ENCODE measurements at regions of chr6 and their contacts with region 1.

Region 1: DNA sequence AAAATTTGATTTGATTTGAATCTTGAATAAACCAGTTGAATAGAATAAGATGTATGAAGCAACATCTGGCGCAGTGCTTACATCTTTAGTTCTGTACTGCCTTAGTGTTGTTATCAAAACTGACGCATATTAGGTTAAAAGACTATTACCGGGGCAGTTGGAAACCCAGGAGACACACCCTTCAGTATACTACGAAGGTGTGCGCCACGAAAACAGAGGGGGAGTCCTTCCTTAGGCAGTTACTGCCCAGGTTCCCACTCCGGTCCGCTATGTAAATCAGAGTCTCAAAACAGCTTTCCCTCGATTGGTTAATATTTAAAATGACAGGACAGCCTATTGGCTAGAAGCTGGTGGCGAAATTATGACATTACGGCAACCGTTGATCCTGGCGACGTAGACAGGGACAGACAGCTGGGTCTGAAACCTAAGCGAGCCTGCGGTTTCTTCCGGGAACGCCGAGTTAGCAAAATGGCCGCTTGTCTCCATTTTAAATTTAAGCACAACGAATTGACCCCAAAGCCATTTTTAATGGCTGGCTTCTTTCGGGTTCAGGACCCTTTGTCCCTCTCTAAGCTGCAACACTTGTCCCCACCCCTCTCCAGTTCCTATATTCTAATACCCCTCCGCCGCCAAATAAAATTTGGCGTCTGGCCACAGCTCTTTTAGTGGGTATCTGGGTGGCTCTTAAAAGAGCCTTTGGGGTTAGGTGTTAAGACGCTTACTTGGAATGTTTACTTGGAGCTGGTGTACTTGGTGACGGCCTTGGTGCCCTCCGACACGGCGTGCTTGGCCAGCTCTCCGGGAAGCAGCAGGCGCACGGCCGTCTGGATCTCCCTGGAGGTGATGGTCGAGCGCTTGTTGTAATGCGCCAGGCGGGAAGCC is 35.8 kb downstream of the HFE start:
- DNase-seq: peak; percentile 95
- H3K4me3 Mint-ChIP-seq: peak overlapping the region; percentile 97
- H3K27ac Mint-ChIP-seq: peak overlapping the region; percentile 100
- H3K4me1 Mint-ChIP-seq: peaks cover 40% of the 10 kb centered on the region
- H3K27me3 Mint-ChIP-seq: no peaks in the 10 kb centered on the region

Region 2: GRCh38 chr6:25397406-25397805 is 725.6 kb before region 1 on chr6:
- CTCF ChIA-PET with region 1: no interaction called
- POLR2A ChIA-PET with region 1: no interaction called
- DNase-seq: no peak
- H3K4me3 Mint-ChIP-seq: no peak overlapping the region
- H3K27ac Mint-ChIP-seq: no peak overlapping the region
- H3K4me1 Mint-ChIP-seq: no peaks in the 10 kb centered on the region
- H3K27me3 Mint-ChIP-seq: no peaks in the 10 kb centered on the region

Region 3: DNA sequence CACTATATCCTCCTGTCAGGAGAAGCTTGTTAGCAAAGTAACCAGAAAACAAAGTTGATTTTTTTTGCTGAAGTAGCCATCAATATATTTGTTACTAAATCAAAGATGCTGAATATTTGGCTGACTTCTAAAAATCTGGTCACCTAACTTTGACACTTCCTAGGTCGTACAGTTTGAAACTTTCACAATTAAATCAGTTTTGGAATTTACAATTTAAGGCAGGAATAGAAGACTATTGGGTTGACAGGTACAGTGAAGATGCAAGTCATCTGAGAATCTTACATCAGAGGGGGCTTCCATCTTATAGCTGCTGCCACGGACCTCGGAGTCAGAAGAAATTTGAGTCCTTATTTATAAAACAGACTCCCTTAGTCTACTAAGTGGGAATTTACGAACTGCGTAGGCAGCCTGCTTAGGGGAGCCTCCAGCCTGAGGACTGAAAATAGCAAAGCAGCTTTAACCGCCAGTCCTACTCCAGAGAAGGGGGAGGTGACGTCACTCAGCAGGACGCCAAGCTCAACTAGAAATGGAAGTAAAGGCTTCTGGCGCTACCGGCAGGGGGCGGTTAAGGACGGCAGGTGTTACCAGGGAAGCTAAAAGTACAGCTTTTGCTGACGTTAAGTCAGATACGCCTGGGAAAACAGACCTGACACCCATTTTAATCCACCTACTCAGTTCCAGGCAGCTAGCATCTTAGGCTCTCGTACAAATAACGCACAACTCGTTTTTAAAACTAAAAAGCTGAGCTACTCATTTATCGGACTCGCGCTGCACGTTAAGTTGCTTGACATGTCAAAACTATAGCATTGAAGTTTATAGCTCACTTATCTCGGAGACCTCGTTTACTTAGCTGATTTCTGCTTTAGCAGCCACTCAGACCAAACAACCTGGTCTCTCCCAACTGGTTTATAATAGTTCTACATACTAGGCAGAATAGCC is 96.9 kb before region 1 on chr6:
- CTCF ChIA-PET with region 1: interaction called, 7 read pairs
- POLR2A ChIA-PET with region 1: interaction called, 289 read pairs
- DNase-seq: peak; percentile 94
- H3K4me3 Mint-ChIP-seq: peak overlapping the region; percentile 75
- H3K27ac Mint-ChIP-seq: peak overlapping the region; percentile 100
- H3K4me1 Mint-ChIP-seq: peaks cover 84% of the 10 kb centered on the region
- H3K27me3 Mint-ChIP-seq: peaks cover 2% of the 10 kb centered on the region

Region 4: DNA sequence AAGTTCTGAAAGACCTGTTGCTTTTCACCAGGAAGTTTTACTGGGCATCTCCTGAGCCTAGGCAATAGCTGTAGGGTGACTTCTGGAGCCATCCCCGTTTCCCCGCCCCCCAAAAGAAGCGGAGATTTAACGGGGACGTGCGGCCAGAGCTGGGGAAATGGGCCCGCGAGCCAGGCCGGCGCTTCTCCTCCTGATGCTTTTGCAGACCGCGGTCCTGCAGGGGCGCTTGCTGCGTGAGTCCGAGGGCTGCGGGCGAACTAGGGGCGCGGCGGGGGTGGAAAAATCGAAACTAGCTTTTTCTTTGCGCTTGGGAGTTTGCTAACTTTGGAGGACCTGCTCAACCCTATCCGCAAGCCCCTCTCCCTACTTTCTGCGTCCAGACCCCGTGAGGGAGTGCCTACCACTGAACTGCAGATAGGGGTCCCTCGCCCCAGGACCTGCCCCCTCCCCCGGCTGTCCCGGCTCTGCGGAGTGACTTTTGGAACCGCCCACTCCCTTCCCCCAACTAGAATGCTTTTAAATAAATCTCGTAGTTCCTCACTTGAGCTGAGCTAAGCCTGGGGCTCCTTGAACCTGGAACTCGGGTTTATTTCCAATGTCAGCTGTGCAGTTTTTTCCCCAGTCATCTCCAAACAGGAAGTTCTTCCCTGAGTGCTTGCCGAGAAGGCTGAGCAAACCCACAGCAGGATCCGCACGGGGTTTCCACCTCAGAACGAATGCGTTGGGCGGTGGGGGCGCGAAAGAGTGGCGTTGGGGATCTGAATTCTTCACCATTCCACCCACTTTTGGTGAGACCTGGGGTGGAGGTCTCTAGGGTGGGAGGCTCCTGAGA is 35.5 kb before region 1 on chr6 and contains the start of gene HFE:
- CTCF ChIA-PET with region 1: interaction called, 5 read pairs
- POLR2A ChIA-PET with region 1: interaction called, 50 read pairs
- DNase-seq: peak; percentile 37
- H3K4me3 Mint-ChIP-seq: peak within 1 kb of the TSS; percentile 77
- H3K27ac Mint-ChIP-seq: peak within 1 kb of the TSS; percentile 47
- H3K4me1 Mint-ChIP-seq: peaks cover 37% of the 10 kb centered on the region
- H3K27me3 Mint-ChIP-seq: peaks cover 8% of the 10 kb centered on the region
- total RNA-seq, gene HFE: 3.1 to 3.4 TPM

Region 5: DNA sequence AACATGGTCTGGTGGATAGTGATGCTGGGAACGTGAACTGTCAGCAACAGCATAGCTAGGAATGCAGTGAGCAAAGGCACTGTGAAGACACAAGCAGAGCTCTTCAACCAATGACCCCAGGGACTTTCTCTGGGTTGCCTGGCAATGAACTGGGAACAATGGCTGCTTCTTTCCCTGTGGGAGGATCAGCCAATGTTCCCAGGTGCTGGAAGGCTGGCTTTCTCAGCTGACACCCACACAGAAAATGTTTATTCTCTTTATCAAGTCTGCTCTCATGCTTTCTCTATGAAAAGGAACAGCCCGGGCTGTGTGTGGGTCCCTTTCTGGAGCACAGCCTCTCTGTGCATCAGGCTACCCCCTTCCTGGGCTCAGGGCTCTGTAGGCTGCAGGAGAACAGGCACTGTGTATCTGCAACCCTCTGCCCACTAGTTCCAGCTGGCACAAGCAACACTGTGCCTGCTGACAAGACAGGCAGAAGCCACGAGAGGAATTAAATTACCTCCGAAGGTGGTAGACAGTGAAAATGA is 18.4 kb after region 1 on chr6:
- CTCF ChIA-PET with region 1: interaction called, 4 read pairs
- POLR2A ChIA-PET with region 1: interaction called, 47 read pairs
- DNase-seq: no peak
- H3K4me3 Mint-ChIP-seq: no peak overlapping the region
- H3K27ac Mint-ChIP-seq: no peak overlapping the region
- H3K4me1 Mint-ChIP-seq: peaks cover 6% of the 10 kb centered on the region
- H3K27me3 Mint-ChIP-seq: no peaks in the 10 kb centered on the region

Region 6: GRCh38 chr6:26183581-26184366 is 60.7 kb after region 1 on chr6:
- CTCF ChIA-PET with region 1: interaction called, 6 read pairs
- POLR2A ChIA-PET with region 1: interaction called, 122 read pairs
- DNase-seq: peak; percentile 78
- H3K4me3 Mint-ChIP-seq: peak overlapping the region; percentile 75
- H3K27ac Mint-ChIP-seq: peak overlapping the region; percentile 92
- H3K4me1 Mint-ChIP-seq: peaks cover 71% of the 10 kb centered on the region
- H3K27me3 Mint-ChIP-seq: no peaks in the 10 kb centered on the region

Region 7: DNA sequence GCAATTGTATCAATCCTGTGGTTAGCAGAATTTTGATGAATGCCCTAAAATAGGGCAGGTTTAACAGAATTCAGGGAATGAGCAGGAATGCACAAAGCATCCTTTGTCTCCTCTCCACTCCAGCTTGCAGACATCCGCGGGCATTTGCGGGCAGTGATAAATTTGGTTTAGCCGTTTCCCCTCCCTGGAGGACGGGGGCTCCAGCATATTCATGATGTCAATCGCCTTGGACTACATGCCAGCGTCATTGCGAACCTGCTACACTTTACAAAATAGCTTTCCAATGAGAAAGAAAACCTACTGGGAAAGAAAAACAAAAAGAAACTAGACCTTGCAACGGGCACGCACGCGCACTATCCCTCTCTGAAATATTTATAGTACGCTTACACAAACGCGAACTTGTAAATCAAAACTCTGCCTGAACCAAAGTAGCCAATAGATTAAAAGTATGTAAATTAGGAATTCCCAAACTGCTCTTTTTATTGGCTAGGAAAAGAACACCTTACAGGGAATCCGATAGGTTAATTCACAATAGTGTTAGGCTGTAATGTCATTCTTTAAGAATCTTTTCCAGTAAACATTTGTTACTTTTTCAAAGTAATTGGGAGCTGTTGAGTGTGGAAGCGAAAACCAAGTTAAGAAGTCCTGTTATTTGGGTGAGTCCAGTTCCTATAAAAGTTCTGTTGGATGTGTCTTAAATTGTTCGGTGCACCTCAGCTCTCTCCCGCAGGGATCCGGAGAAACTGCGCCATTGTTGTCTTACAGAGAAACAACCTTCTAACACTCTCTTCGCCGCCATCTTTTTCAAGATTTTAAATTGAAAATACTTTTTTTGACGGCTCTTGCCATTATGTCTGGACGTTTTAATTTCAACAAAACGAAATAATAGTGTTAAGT is 100.9 kb after region 1 on chr6:
- CTCF ChIA-PET with region 1: no interaction called
- POLR2A ChIA-PET with region 1: interaction called, 37 read pairs
- DNase-seq: peak; percentile 72
- H3K4me3 Mint-ChIP-seq: no peak overlapping the region
- H3K27ac Mint-ChIP-seq: no peak overlapping the region
- H3K4me1 Mint-ChIP-seq: peaks cover 31% of the 10 kb centered on the region
- H3K27me3 Mint-ChIP-seq: no peaks in the 10 kb centered on the region

Region 8: GRCh38 chr6:27146706-27147505 is 1023.9 kb after region 1 on chr6:
- CTCF ChIA-PET with region 1: no interaction called
- POLR2A ChIA-PET with region 1: interaction called, 16 read pairs
- DNase-seq: peak; percentile 87
- H3K4me3 Mint-ChIP-seq: no peak overlapping the region
- H3K27ac Mint-ChIP-seq: no peak overlapping the region
- H3K4me1 Mint-ChIP-seq: peaks cover 31% of the 10 kb centered on the region
- H3K27me3 Mint-ChIP-seq: no peaks in the 10 kb centered on the region

Measured in activated CD4-positive, alpha-beta memory T cell treated with anti-CD3 and anti-CD28 coated beads, Interleukin-2, amount 10 ng/mL, durations not matched to agents 7 days and 5 days (primary cell).